ENCODE measurements at regions of chr13 and their contacts with region 1.

Region 1: DNA sequence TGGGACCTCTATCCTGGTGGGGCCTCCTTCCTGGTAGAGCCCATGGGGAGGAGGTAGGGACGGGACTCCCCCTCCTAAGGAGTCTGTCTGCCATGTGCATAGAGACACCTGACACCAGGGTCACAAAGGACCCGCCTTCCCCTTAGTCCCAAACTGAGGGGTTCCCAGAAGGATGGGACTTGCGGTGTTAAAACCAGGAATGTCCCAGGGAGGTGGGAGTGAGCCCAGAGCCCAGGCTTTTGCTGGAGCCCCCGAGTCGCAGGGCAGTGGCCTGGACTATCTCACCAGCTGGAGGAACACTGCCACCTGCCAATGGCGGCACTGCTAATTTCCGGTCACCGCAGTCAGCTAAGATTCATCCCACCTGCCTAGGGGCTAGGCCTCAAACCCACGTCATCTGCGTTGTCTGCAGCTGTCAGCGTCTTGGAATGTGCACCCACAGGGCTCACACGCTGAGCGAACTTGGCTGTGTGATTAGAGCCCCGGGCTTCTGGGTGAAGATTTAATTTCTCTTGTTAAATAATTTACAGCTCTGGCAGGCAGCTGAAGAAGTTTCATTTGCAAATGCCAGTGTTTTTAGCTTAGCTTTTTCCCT is 31.9 kb upstream of the ATP11A start:
- DNase-seq: no peak

Region 2: DNA sequence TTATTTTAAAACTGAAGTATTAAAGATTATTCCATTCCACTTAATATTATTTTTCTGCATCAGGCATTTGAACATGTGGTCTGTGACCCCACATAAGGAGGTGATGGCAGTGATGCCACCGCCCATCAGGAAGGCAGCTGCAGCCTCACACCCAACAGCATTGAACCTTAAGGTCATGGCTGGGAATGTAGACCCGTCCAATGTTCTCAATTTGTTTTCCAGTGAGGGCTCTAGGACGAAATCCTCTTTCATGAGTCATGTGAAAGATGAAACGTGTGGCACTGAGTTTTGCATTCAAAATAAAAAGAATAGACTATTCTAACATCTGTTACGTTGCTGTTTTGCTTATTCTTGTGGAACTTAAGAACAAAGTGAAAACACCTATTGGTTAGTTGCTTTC is 1668.6 kb before region 1 on chr13:
- intact Hi-C with region 1: loop called in 1 of 2 experiments (anchors 10 kb)
- DNase-seq: no peak

Measured in posterior vena cava (tissue), 2 donors.